ENCODE measurements at regions of chr1 and their contacts with region 1.

Region 1: DNA sequence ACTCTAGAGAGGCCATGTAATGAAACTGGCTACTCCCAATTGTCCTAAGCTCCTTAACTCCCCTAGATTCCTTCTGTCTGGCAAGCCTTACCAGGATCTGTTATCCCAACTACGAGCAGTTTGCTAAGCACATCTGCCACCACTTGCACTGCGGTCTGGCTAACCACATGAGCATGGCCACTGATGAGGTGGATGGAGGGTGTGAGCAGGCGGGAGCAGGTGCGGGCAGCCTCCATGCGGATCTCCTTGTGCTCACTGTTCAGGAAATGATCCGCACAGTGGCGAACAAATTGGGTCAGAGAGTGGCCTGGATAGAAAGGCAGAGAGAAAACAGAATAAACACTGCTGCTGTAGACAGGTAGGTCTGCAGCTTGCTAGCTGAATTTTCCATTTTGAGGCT is 24.0 kb downstream of the MTOR start:
- DNase-seq: no peak
- ATAC-seq: no peak
- H3K4me3 Mint-ChIP-seq: no peak overlapping the region
- H3K27ac Mint-ChIP-seq: no peak overlapping the region
- H3K4me1 Mint-ChIP-seq: peaks cover 10% of the 10 kb centered on the region
- H3K27me3 Mint-ChIP-seq: no peaks in the 10 kb centered on the region

Region 2: DNA sequence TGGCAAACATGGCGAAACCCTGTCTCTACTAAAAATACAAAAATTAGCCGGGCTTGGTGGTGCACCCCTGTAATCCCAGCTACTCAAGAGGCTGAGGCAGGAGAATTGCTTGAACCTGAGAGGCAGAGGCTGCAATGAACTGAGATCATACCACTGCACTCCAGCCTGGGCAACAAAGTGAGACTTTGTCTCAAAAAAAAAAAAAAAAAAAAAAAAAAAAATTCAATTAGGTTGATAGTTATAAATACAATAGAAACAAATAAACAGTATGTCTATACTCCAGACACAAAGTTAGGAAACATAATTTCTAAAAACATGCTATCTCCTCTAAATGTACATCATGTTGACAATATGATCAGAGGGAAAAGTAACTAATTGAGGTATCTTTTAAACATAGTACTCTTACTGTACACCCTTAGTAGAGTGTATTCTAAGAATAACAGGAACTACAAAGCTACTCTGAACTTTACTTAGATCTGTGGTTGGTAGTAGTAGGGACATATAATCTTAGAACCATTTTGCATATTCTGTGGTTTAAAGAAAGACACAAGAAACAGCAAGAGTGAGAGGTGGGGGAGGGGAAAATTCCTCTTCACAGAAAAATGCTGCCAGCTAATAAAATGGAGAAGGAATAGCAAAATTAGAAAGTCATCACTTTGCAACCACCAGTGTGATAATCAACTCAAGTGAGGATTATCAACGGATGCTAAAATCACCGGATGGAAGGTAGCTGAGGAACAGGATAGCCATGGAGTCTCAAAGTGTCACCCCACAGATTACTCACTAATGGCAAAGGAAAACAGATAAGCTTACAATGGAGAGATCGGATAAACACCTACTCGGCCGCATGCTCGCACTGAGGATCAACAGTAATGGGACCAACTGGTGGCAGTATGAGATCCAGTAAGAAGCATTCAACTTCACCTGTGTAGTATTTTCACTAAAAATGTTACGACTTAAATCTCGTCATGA is 10.9 kb before region 1 on chr1:
- CTCF ChIA-PET with region 1: interaction called, 48 read pairs
- DNase-seq: no peak
- ATAC-seq: no peak
- H3K4me3 Mint-ChIP-seq: no peak overlapping the region
- H3K27ac Mint-ChIP-seq: peak overlapping the region; percentile 48
- H3K4me1 Mint-ChIP-seq: peaks cover 21% of the 10 kb centered on the region
- H3K27me3 Mint-ChIP-seq: no peaks in the 10 kb centered on the region